Caco-2 (cell line): ENCODE measurements at regions of chr7 and their contacts with region 1.

Region 1: DNA sequence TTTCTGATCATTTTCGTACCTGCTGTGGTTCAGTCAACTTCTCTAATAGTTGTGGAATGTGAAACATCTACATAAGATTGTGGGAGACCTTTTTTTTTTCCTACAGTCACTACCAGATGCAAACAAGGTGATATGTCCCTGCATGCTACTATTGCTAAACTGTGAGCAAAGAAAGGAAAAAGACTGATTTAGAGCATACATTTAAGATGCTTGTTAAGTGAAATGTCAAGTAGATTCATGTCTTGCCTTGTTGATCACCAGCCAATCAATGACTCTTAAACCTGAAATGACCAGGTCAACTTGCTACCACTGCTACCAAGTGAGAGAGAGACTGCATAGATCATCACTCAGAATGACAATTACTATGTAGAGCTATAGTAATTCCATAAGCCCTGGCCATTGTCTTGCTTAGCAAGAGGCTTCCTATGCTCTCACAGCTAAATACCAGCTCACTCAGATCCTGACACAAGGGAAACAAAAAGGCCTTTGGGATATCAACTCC is 84.3 kb upstream of the SKAP2 start:
- DNase-seq: peak in 1 of 2 experiments; percentile 6
- H3K4me3 ChIP-seq: no peak overlapping the region
- H3K4me3 Mint-ChIP-seq: no peak overlapping the region
- H3K27ac Mint-ChIP-seq: no peak overlapping the region
- H3K4me1 ChIP-seq: peaks cover 23% of the 10 kb centered on the region
- H3K4me1 Mint-ChIP-seq: peaks cover 18% of the 10 kb centered on the region
- H3K27me3 ChIP-seq: no peaks in the 10 kb centered on the region
- H3K27me3 Mint-ChIP-seq: no peaks in the 10 kb centered on the region
- CTCF ChIP-seq: no peak

Region 2: GRCh38 chr7:26989897-26990670 is 41.4 kb after region 1 on chr7:
- CTCF ChIA-PET with region 1: no interaction called
- POLR2A ChIA-PET with region 1: no interaction called
- intact Hi-C with region 1: no loop called
- DNase-seq: no peak
- H3K4me3 ChIP-seq: no peak overlapping the region
- H3K4me3 Mint-ChIP-seq: no peak overlapping the region
- H3K27ac Mint-ChIP-seq: no peak overlapping the region
- H3K4me1 ChIP-seq: peaks cover 10% of the 10 kb centered on the region; the same call in 1 of the 2 replicates
- H3K4me1 Mint-ChIP-seq: no peaks in the 10 kb centered on the region
- H3K27me3 ChIP-seq: no peaks in the 10 kb centered on the region
- H3K27me3 Mint-ChIP-seq: no peaks in the 10 kb centered on the region
- CTCF ChIP-seq: no peak

Region 3: DNA sequence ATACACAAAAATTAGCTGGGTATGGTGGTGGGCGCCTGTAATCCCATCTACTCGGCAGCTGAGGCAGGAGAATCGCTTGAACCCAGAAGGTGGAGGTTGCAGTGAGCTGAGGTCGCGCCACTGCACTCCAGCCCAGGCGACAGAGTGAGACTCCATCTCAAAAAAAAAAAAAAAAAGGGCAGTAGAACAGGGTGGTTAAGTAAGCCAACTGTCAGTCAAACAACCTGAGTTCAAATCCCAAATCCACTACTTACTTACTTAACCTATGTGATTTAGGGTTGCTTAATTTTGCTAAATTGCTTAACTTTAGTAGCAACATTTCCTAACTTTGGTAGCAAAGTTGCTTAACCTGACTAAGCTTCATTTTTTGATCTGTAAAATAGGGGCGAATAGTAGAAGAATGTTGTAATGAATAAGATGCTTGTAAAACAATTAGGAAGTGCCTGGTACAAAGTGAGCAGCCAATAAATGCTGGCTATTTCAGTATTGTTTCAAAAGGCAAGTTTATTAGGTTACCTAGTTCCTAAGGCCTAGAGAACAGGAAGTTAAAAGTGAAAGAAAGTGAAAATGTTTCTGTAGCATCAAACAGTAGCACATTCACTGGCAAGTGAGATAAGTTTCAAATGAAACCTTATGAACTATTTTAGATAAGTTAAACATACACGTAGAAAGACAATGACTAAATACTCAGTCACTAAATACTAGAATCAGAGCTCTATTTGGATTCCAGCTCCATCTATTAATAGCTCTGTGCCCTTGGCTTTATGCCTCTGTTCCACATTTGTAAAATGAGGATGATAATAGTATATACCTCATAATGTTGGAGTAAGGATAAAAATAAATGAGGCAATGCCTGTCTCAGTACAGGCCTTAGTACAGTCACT is 82.9 kb after region 1 on chr7:
- CTCF ChIA-PET with region 1: no interaction called
- POLR2A ChIA-PET with region 1: no interaction called
- intact Hi-C with region 1: loop called (anchors 5 kb)
- DNase-seq: no peak
- H3K4me3 ChIP-seq: no peak overlapping the region
- H3K4me3 Mint-ChIP-seq: no peak overlapping the region
- H3K27ac Mint-ChIP-seq: peak overlapping the region; percentile 58
- H3K4me1 ChIP-seq: peaks cover 14% of the 10 kb centered on the region
- H3K4me1 Mint-ChIP-seq: peaks cover 12% of the 10 kb centered on the region
- H3K27me3 ChIP-seq: no peaks in the 10 kb centered on the region
- H3K27me3 Mint-ChIP-seq: no peaks in the 10 kb centered on the region
- CTCF ChIP-seq: no peak

Region 4: GRCh38 chr7:27124096-27124901 is 175.6 kb after region 1 on chr7:
- CTCF ChIA-PET with region 1: no interaction called
- POLR2A ChIA-PET with region 1: no interaction called
- intact Hi-C with region 1: loop called (anchors 5 kb)
- DNase-seq: no peak
- H3K4me3 ChIP-seq: no peak overlapping the region
- H3K4me3 Mint-ChIP-seq: peak overlapping the region; percentile 92
- H3K27ac Mint-ChIP-seq: peak overlapping the region; percentile 95
- H3K4me1 ChIP-seq: peaks cover 47% of the 10 kb centered on the region
- H3K4me1 Mint-ChIP-seq: peaks cover 38% of the 10 kb centered on the region
- H3K27me3 ChIP-seq: no peaks in the 10 kb centered on the region
- H3K27me3 Mint-ChIP-seq: no peaks in the 10 kb centered on the region
- CTCF ChIP-seq: no peak